Activated CD4-positive, alpha-beta memory T cell treated with anti-CD3 and anti-CD28 coated beads, Interleukin-2, amount 10 ng/mL, durations not matched to agents 7 days and 5 days (primary cell): ENCODE measurements at regions of chr6 and their contacts with region 1.

Region 1: DNA sequence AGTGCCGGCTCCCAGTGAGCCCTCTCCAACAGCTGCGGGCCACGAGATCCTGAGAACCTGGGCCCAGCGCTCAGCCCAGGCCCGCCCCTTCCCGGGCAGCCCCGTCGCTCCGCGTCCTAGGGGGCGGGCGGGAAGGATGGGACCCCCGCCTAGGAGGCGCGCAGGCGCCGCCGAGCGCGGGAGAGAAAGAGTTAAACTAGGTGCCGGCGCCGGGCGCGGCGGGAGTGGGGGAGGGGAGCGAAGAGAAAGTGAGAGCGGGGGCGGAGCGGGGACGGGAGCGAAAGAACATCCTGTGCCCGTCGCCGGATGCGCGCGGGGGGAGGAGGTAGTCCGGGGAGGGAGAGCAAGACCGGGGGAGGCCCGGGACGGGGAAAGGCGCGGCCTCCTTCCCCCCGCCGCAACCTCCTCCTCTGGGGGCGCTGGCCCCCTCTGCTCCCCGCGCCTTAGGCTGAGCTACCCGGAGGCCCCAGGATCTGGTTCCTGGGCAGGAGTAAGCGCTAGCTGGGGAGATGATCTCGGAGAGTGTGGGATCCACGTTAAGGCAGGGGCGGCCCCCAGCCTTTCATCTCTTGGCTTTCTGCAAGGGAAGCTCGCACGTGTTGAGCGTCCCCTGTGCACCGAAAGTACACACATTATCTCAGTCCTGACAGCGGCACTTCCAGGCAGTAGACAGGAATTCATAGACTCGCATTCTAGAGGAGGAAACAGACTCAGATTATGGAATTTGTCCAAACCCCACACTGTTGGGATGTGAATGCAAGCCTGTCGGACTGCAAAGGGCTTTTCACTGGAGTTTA is 4.9 kb upstream of the ARMC12 start:
- DNase-seq: peak; percentile 95
- H3K4me3 Mint-ChIP-seq: peak overlapping the region; percentile 83
- H3K27ac Mint-ChIP-seq: peak overlapping the region; percentile 94
- H3K4me1 Mint-ChIP-seq: peaks cover 72% of the 10 kb centered on the region
- H3K27me3 Mint-ChIP-seq: no peaks in the 10 kb centered on the region

Region 2: DNA sequence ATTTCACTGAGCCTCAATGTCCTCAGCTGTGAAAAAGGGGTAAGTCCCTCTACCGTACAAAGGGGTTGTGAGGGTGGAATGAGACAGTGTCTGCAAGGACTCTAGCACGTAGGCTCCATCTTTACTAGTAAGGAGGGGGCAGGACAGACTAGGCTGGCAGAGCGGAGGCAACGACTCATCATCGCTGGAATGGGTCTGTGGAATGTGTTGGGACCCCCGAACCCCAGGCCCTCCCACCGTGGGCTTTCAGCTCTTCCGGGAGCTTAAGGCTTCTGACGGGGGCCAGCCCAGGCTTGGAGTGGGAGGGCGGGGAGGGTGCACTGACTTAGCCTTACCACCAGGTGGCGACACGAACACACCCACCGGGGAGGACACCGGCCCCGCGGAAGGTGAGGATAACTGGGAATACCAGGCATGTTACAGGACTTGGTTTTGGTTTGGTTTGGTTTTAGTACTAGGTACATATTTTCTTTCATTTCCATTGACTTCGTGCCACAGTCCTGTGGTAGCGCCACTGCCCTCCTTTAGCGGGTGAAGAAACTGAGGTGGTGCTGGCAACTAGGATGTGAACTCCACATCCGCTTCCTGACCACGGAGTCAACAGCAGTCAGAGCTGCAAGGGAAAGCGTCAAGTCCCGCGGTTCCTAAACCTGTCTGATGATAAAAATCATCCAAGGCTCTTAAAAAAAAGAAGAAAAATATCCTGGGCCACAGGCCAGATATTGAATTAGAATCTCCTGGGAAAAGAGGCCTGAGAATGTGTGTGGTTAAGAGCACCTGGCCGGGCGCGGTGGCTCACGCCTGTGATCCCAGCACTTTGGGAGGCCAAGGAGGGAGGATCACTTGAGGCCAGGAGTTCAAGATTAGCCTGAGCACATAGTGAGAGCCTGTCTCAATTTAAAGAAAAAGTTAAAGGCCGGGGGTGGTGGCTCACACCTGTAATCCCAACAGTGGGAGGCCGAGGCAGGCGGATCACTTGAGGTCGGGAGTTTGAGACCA is 209.0 kb before region 1 on chr6:
- CTCF ChIA-PET with region 1: interaction called, 53 read pairs
- POLR2A ChIA-PET with region 1: interaction called, 3 read pairs
- DNase-seq: peak; percentile 80
- H3K4me3 Mint-ChIP-seq: peak overlapping the region; percentile 55
- H3K27ac Mint-ChIP-seq: peak overlapping the region; percentile 72
- H3K4me1 Mint-ChIP-seq: peaks cover 22% of the 10 kb centered on the region
- H3K27me3 Mint-ChIP-seq: peaks cover 8% of the 10 kb centered on the region

Region 3: GRCh38 chr6:35583893-35584688 is 147.8 kb before region 1 on chr6:
- CTCF ChIA-PET with region 1: interaction called, 90 read pairs
- POLR2A ChIA-PET with region 1: interaction called, 8 read pairs
- DNase-seq: peak; percentile 77
- H3K4me3 Mint-ChIP-seq: no peak overlapping the region
- H3K27ac Mint-ChIP-seq: no peak overlapping the region
- H3K4me1 Mint-ChIP-seq: peaks cover 15% of the 10 kb centered on the region
- H3K27me3 Mint-ChIP-seq: no peaks in the 10 kb centered on the region

Region 4: GRCh38 chr6:35624341-35625070 is 107.4 kb before region 1 on chr6:
- CTCF ChIA-PET with region 1: interaction called, 14 read pairs
- POLR2A ChIA-PET with region 1: no interaction called
- DNase-seq: no peak
- H3K4me3 Mint-ChIP-seq: no peak overlapping the region
- H3K27ac Mint-ChIP-seq: peak overlapping the region; percentile 1
- H3K4me1 Mint-ChIP-seq: peaks cover 6% of the 10 kb centered on the region
- H3K27me3 Mint-ChIP-seq: no peaks in the 10 kb centered on the region

Region 5: GRCh38 chr6:35669451-35670045 is 62.4 kb before region 1 on chr6:
- CTCF ChIA-PET with region 1: interaction called, 15 read pairs
- POLR2A ChIA-PET with region 1: interaction called, 23 read pairs
- DNase-seq: no peak
- H3K4me3 Mint-ChIP-seq: peak overlapping the region; percentile 75
- H3K27ac Mint-ChIP-seq: peak overlapping the region; percentile 90
- H3K4me1 Mint-ChIP-seq: peaks cover 56% of the 10 kb centered on the region
- H3K27me3 Mint-ChIP-seq: no peaks in the 10 kb centered on the region

Region 6: GRCh38 chr6:35710241-35710847 is 21.6 kb before region 1 on chr6:
- CTCF ChIA-PET with region 1: interaction called, 6 read pairs
- POLR2A ChIA-PET with region 1: interaction called, 10 read pairs
- DNase-seq: no peak
- H3K4me3 Mint-ChIP-seq: no peak overlapping the region
- H3K27ac Mint-ChIP-seq: peak overlapping the region; percentile 44
- H3K4me1 Mint-ChIP-seq: peaks cover 19% of the 10 kb centered on the region
- H3K27me3 Mint-ChIP-seq: no peaks in the 10 kb centered on the region